SK-N-SH (cell line): ENCODE measurements at regions of chr22 and their contacts with region 1.

Region 1: DNA sequence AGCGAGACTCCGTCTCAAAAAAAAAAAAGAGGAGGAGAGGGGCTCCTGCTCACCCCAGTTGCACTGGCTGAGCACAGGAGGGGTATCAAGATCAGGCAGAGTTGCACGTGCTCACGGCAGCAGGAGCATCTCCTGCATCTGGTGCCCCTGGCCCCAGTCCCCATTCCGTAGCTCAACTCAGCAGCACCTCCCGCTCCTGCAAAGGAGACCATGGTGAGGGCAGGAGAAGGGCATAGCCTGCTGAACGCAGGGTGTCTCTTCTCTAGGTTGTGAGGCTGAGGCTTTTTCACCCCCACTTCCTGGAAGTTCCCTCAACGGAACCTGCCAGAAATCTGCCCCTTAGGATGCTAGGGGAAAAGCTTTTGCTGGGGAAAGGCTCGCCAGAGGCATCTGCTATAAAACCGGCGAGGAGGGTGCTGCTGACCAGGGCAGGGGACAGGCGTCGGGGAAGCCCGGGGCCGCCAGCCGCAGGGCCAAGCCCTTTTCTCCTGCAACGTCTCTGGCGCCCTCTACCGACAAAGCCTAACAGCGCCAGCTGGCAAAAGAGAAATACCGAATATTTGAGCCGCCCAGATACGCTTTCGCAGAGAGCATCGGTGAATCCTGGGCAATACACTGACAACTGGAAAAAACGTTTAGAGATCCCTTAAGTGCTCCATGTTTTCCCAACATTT is 1.0 kb upstream of the PPP6R2 start:
- DNase-seq: peak; percentile 87
- H3K4me3 ChIP-seq: peak overlapping the region; percentile 56 to 75
- H3K27ac ChIP-seq: peak overlapping the region; percentile 56 to 84
- H3K4me1 ChIP-seq: peaks cover 0 to 10% of the 10 kb centered on the region in 2 experiments; a peak in 1 of 4 replicates
- H3K27me3 ChIP-seq: no peaks in the 10 kb centered on the region
- CTCF ChIP-seq: peak; percentile 96
- EP300 ChIP-seq: no peak
- RAD21 ChIP-seq: peak; percentile 90

Region 2: GRCh38 chr22:50236731-50237409 is 105.2 kb before region 1 on chr22:
- CTCF ChIA-PET with region 1: interaction called, 38 read pairs
- POLR2A ChIA-PET with region 1: no interaction called
- DNase-seq: no peak
- H3K4me3 ChIP-seq: no peak overlapping the region
- H3K27ac ChIP-seq: no peak overlapping the region
- H3K4me1 ChIP-seq: peaks cover 0 to 9% of the 10 kb centered on the region in 2 experiments; a peak in 1 of 4 replicates
- H3K27me3 ChIP-seq: no peaks in the 10 kb centered on the region
- CTCF ChIP-seq: peak; percentile 55
- EP300 ChIP-seq: no peak
- RAD21 ChIP-seq: peak; percentile 45

Region 3: GRCh38 chr22:50250555-50251476 is 91.3 kb before region 1 on chr22 and contains the start of gene HDAC10:
- CTCF ChIA-PET with region 1: interaction called, 53 read pairs
- POLR2A ChIA-PET with region 1: no interaction called
- DNase-seq: peak; percentile 94
- H3K4me3 ChIP-seq: peak within 1 kb of the TSS; percentile 80 to 89
- H3K27ac ChIP-seq: peak within 1 kb of the TSS; percentile 62 to 86
- H3K4me1 ChIP-seq: peaks cover 6 to 54% of the 10 kb centered on the region in 2 experiments; a peak in 2 of 4 replicates
- H3K27me3 ChIP-seq: no peaks in the 10 kb centered on the region
- CTCF ChIP-seq: no peak
- EP300 ChIP-seq: no peak
- RAD21 ChIP-seq: no peak
- polyA plus RNA-seq, gene HDAC10: 51.9 and 55.1 TPM in 2 replicates

Region 4: GRCh38 chr22:50276143-50276542 is 66.0 kb before region 1 on chr22:
- CTCF ChIA-PET with region 1: interaction called, 75 read pairs
- POLR2A ChIA-PET with region 1: no interaction called
- DNase-seq: peak; percentile 79
- H3K4me3 ChIP-seq: no peak overlapping the region
- H3K27ac ChIP-seq: no peak overlapping the region
- H3K4me1 ChIP-seq: peaks cover 4 to 11% of the 10 kb centered on the region in 2 experiments; a peak in 2 of 4 replicates
- H3K27me3 ChIP-seq: no peaks in the 10 kb centered on the region
- CTCF ChIP-seq: peak; percentile 49
- EP300 ChIP-seq: no peak
- RAD21 ChIP-seq: peak; percentile 19; the same call in 1 of the 2 replicates

Region 5: DNA sequence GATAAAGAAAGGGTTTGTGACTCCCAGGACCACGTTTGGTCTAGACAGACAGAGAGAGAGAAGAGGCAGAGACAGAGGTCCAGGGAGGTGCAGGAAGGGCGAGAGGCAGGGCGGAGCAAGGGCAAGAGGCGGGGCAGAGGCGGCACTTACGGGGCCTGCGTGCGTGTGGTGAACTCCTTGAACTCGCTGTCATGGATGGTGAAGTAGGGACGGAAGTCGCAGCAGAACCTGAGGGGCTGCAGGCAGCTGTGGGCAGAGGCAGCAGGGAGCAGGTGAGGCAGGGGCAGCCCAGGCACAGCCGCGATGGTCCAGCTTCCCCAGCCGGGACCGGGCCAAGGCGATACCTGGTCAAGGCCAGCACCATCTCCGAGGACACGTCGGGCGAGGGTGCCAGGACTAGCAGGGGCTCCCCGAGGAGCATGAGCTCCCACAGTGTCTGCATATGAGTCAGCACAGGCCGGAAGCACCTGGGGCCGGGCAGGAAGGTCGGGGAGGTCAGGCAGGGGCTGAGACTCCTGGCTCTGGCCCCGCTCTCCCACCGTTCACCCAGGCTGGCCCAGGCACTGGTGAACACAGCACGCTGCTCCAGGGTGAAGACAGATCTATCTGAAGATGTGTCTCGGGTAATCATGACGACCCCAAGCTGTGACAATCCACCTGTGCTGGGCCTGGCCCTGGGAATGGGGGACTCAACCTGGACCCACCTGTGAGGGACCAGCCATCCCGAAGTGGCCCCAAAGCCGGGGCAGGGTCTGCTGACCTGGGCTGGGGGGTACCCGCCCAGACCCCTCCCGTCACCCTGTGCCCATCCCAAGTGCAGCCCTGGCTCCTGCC is 27.4 kb before region 1 on chr22:
- CTCF ChIA-PET with region 1: interaction called, 11 read pairs
- POLR2A ChIA-PET with region 1: no interaction called
- DNase-seq: peak; percentile 22
- H3K4me3 ChIP-seq: no peak overlapping the region
- H3K27ac ChIP-seq: no peak overlapping the region
- H3K4me1 ChIP-seq: no peaks in the 10 kb centered on the region
- H3K27me3 ChIP-seq: no peaks in the 10 kb centered on the region
- CTCF ChIP-seq: no peak
- EP300 ChIP-seq: no peak
- RAD21 ChIP-seq: no peak

Region 6: GRCh38 chr22:50326959-50327710 is 15.0 kb before region 1 on chr22 and contains the start of gene DENND6B:
- CTCF ChIA-PET with region 1: interaction called, 60 read pairs
- POLR2A ChIA-PET with region 1: interaction called, 5 read pairs
- DNase-seq: peak; percentile 97
- H3K4me3 ChIP-seq: peak within 1 kb of the TSS; percentile 59 to 75
- H3K27ac ChIP-seq: peak within 1 kb of the TSS; percentile 62 to 78
- H3K4me1 ChIP-seq: peaks cover 6 to 12% of the 10 kb centered on the region in 2 experiments; a peak in 2 of 4 replicates
- H3K27me3 ChIP-seq: no peaks in the 10 kb centered on the region
- CTCF ChIP-seq: peak; percentile 25; the same call in 1 of the 2 replicates
- EP300 ChIP-seq: 0 out of 4 replicates have a peak, but pooled peaks of 1 of the 2 experiments have one; percentile 6
- RAD21 ChIP-seq: peak; percentile 50; the same call in 1 of the 2 replicates
- polyA plus RNA-seq, gene DENND6B: 5.6 and 5.8 TPM in 2 replicates

Region 7: GRCh38 chr22:50537765-50538164 is 195.7 kb after region 1 on chr22:
- CTCF ChIA-PET with region 1: no interaction called
- POLR2A ChIA-PET with region 1: no interaction called
- DNase-seq: peak; percentile 13
- H3K4me3 ChIP-seq: no peak overlapping the region
- H3K27ac ChIP-seq: no peak overlapping the region
- H3K4me1 ChIP-seq: peaks cover 0 to 6% of the 10 kb centered on the region in 2 experiments; a peak in 1 of 4 replicates
- H3K27me3 ChIP-seq: no peaks in the 10 kb centered on the region
- CTCF ChIP-seq: no peak
- EP300 ChIP-seq: no peak
- RAD21 ChIP-seq: no peak